ENCODE measurements at regions of chr12 and their contacts with region 1.

Region 1: GRCh38 chr12:85866986-85867776 is 6.9 kb upstream of the NTS start:
- DNase-seq: no peak
- H3K4me3 ChIP-seq: peak overlapping the region in 2 of 4 donors; percentile 25 to 50
- H3K27ac ChIP-seq: peak overlapping the region; percentile 24 to 72 (median 45)
- H3K4me1 ChIP-seq: peaks cover 0 to 33% (median 0%) of the 10 kb centered on the region in 3 donors
- H3K27me3 ChIP-seq: no peaks in the 10 kb centered on the region
- CTCF ChIP-seq: peak in 5 of 6 experiments; percentile 70 to 86 (median 78)
- POLR2A ChIP-seq: no peak

Region 2: GRCh38 chr12:85484387-85484786 is 382.8 kb before region 1 on chr12:
- intact Hi-C with region 1: loop called (anchors 10 kb)
- DNase-seq: no peak
- H3K4me3 ChIP-seq: no peak overlapping the region
- H3K27ac ChIP-seq: no peak overlapping the region
- H3K4me1 ChIP-seq: peaks cover 0 to 5% (median 0%) of the 10 kb centered on the region in 3 donors
- H3K27me3 ChIP-seq: no peaks in the 10 kb centered on the region
- CTCF ChIP-seq: no peak
- POLR2A ChIP-seq: no peak

Region 3: GRCh38 chr12:85575120-85576096 is 291.8 kb before region 1 on chr12:
- intact Hi-C with region 1: loop called (anchors 5 kb)
- DNase-seq: no peak
- H3K4me3 ChIP-seq: no peak overlapping the region
- H3K27ac ChIP-seq: no peak overlapping the region
- H3K4me1 ChIP-seq: peaks cover 0 to 15% (median 0%) of the 10 kb centered on the region in 3 donors
- H3K27me3 ChIP-seq: no peaks in the 10 kb centered on the region
- CTCF ChIP-seq: peak in 5 of 6 experiments; percentile 49 to 74 (median 59)
- POLR2A ChIP-seq: no peak

Region 4: GRCh38 chr12:85725991-85726390 is 141.2 kb before region 1 on chr12:
- intact Hi-C with region 1: no loop called
- DNase-seq: no peak
- H3K4me3 ChIP-seq: no peak overlapping the region
- H3K27ac ChIP-seq: no peak overlapping the region
- H3K4me1 ChIP-seq: no peaks in the 10 kb centered on the region
- H3K27me3 ChIP-seq: no peaks in the 10 kb centered on the region
- CTCF ChIP-seq: no peak
- POLR2A ChIP-seq: no peak